Activated B cell treated with CpG ODN at 0.5 μM for 24 hours (primary cell): ENCODE measurements at regions of chr1 and their contacts with region 1.

Region 1: DNA sequence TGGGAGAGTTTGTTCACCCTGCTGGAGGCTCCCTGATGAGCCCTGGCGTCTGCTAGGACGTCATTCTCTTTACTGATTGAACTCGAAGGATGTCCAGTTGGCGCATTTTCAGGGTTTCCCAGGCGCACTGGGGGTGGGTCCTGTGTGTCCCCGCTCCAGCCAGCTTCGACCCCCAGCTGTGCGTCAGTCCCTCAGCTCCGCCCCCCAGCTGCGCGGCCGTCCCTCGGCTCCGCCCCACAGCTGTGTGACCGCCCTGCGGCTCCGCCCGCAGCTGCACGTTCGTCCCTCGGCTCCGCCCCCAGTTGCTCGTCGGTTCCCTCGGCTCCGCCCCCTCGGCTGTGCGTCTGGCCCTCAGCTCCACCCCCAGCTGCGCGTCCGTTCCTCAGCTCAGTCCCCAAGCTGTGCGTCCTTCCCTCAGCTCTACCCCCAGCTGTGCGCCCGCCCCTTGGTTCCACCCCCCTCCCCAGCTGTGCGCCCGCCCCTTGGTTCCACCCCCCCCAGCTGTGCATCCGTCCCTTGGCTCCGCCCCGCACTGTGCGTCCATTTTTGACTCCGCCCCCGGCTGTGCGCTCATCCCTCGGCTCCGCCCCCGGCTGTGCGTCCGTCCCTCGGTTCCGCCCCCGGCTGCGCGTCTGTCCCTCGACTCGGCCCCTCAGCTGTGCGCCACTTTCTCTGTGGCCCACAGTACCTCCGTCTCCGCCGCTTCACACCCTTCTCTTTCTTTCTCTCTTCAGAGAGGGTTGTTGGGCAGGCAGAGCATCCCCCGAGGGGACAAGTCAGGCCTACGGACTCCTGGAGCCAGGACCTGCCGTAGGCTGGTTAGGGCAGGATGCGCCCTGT is 61.3 kb downstream of the FAAP20 start:
- DNase-seq: peak; percentile 97
- ATAC-seq: peak; percentile 90
- H3K4me3 Mint-ChIP-seq: peak overlapping the region; percentile 80
- H3K27ac Mint-ChIP-seq: peak overlapping the region; percentile 75
- H3K4me1 Mint-ChIP-seq: peaks cover 14% of the 10 kb centered on the region
- H3K27me3 Mint-ChIP-seq: no peaks in the 10 kb centered on the region
- CTCF ChIP-seq: no peak

Region 2: GRCh38 chr1:1919304-1920056 is 213.8 kb before region 1 on chr1:
- CTCF ChIA-PET with region 1: no interaction called
- POLR2A ChIA-PET with region 1: no interaction called
- intact Hi-C with region 1: loop called (anchors 1 kb)
- DNase-seq: peak; percentile 100
- ATAC-seq: peak; percentile 90
- H3K4me3 Mint-ChIP-seq: peak overlapping the region; percentile 73
- H3K27ac Mint-ChIP-seq: peak overlapping the region; percentile 56
- H3K4me1 Mint-ChIP-seq: no peaks in the 10 kb centered on the region
- H3K27me3 Mint-ChIP-seq: no peaks in the 10 kb centered on the region
- CTCF ChIP-seq: no peak

Region 3: GRCh38 chr1:2049718-2050427 is 83.4 kb before region 1 on chr1 and contains the start of gene PRKCZ:
- CTCF ChIA-PET with region 1: interaction called, 4 read pairs
- POLR2A ChIA-PET with region 1: no interaction called
- intact Hi-C with region 1: loop called (anchors 5 kb)
- DNase-seq: peak; percentile 95
- ATAC-seq: peak; percentile 96
- H3K4me3 Mint-ChIP-seq: peak within 1 kb of the TSS; percentile 81
- H3K27ac Mint-ChIP-seq: peak within 1 kb of the TSS; percentile 68
- H3K4me1 Mint-ChIP-seq: peaks cover 31% of the 10 kb centered on the region
- H3K27me3 Mint-ChIP-seq: peaks cover 8% of the 10 kb centered on the region
- CTCF ChIP-seq: no peak
- total RNA-seq, gene PRKCZ: 20.5 and 28.5 TPM in 2 replicates

Region 4: DNA sequence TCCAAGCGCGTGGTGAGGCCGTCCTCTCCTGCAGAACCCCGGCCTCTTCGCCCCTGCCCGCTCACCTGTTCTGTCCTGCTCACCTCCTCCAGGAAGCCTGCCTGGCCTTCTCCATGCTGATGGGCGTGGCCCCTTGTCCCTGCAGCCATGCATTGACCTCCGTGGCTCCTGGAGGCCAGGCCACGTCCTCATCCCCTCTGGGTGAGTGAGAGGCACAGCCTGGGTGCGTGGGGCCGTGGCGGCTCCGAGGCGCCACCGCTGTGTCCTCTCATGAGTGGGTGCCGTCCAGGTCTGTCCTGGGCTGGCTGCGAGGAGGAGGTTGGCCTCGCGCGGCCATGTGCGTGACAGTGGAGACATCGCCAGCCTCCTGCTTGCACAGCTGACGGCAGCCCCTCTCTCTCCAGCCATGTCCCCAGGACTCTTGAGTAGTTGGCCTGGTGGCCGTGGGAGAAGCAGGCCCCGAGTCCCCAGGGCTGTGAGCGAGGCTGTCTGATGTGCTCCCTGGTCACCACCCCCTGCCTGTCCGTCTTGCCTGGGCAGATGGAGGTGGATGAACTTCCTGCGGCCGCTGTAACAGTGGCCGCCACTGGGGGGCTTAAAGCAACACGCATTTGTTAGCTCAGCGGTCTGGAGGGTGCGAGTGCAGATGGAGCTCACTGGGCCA is 24.9 kb before region 1 on chr1:
- CTCF ChIA-PET with region 1: no interaction called
- POLR2A ChIA-PET with region 1: no interaction called
- intact Hi-C with region 1: loop called (anchors 1 kb)
- DNase-seq: no peak
- ATAC-seq: no peak
- H3K4me3 Mint-ChIP-seq: no peak overlapping the region
- H3K27ac Mint-ChIP-seq: no peak overlapping the region
- H3K4me1 Mint-ChIP-seq: peaks cover 22% of the 10 kb centered on the region
- H3K27me3 Mint-ChIP-seq: no peaks in the 10 kb centered on the region
- CTCF ChIP-seq: no peak

Region 5: DNA sequence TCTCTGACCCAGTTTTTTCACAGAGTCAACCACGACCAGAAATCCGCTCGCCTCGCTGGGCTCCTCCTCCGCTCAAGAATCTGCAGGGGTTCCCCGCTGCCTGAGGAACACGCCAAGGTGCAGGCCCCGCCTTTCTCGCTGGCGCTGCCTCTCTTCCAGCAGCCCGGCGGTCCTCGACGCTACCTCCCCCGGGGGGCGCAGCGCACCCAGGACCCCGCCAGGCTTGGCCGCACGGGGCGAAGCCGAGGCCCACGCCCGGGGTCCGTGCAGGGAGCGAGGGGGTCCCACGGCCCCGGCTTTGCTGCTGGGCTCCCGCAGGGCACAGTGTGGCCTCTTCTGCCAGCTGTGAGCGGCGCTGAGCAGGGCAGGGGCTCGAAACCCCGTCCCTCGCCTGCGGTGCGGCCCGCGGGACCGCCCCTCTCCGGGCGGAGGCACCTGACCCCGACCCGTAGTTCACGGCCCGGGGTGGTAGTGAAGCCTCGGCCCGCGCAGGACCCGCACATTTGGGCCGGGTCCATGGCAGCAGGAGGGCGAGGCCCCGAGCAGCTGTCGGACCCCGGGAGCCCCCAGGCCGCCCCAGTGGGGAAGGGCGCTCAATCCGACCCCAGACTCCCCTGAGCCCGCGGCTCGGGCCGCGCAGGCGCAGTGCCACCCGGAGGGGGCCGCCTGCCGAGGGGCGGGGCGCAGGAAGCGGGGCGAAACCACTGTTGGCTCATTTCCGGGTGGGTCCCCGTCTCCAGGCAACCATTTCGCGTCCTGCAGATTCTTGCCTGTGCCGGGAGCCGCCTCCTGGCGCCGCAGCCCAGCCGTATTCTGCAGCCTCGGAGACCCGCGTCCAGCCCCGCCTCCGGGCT is 509.5 kb after region 1 on chr1:
- CTCF ChIA-PET with region 1: no interaction called
- POLR2A ChIA-PET with region 1: no interaction called
- intact Hi-C with region 1: loop called (anchors 10 kb)
- DNase-seq: peak; percentile 92
- ATAC-seq: peak; percentile 79
- H3K4me3 Mint-ChIP-seq: peak overlapping the region; percentile 80
- H3K27ac Mint-ChIP-seq: peak overlapping the region; percentile 73
- H3K4me1 Mint-ChIP-seq: peaks cover 11% of the 10 kb centered on the region
- H3K27me3 Mint-ChIP-seq: peaks cover 3% of the 10 kb centered on the region
- CTCF ChIP-seq: no peak